ENCODE measurements at regions of chr20 and their contacts with region 1.

Region 1: GRCh38 chr20:49484180-49485140 is 2.0 kb upstream of the KCNB1 start:
- DNase-seq: peak; percentile 64 to 73
- ATAC-seq: peak; percentile 82 to 86
- H3K4me3 ChIP-seq: peak overlapping the region; percentile 51 to 65 (median 63)
- H3K27ac ChIP-seq: peak overlapping the region in 1 of 4 donors; percentile 44
- H3K4me1 ChIP-seq: peaks cover 5 to 37% of the 10 kb centered on the region in 2 donors
- H3K27me3 ChIP-seq: no peaks in the 10 kb centered on the region
- CTCF ChIP-seq: peak; percentile 77 to 91 (median 85)
- POLR2A ChIP-seq: no peak

Region 2: DNA sequence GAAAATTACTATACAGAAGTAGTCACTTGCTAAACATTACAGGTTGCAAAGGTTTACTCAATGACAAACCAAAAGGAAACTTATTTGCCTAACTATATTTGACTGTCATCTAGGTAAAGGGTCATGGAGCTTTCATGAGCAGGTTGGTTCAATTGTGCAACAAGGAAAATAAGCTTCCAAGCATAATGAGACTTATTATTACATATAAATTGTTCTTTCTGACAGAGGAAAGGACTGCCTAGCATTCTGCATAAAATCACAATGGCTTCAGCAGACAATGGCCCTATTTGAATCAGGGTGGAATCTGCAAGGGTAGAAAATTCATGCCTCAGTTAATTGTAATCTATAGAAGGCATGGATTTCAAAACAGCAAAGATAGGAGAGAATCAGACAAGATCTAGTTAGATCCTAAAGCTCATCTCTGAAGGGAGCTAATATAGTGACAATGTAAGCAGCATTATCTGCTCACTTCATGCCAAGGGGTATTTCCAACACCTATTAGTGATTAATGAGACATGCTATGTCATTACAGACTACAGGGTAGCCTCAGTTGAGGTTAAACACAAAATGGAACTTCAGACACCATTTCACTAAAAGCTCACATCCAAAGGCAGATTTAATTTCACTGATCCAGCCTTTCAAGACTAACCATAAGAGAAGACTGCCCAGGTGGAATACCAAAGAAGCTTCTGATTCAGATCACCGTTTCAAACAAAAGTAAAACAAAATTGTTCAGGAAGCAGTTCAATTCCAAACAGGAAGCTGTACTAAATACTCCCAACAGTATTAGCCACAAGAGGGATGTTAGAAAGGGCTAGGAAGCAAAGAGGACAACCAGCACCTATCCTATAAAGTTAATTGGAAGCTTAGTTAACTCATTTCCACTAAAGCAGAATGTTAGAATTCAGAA is 304.8 kb before region 1 on chr20:
- in situ Hi-C with region 1: no loop called
- intact Hi-C with region 1: no loop called
- DNase-seq: no peak
- ATAC-seq: no peak
- H3K4me3 ChIP-seq: no peak overlapping the region
- H3K27ac ChIP-seq: peak overlapping the region in 3 of 4 donors; percentile 3 to 60 (median 46)
- H3K4me1 ChIP-seq: peaks cover 27 to 29% of the 10 kb centered on the region in 2 donors
- H3K27me3 ChIP-seq: no peaks in the 10 kb centered on the region
- CTCF ChIP-seq: no peak
- POLR2A ChIP-seq: no peak

Region 3: GRCh38 chr20:49338061-49338460 is 146.4 kb before region 1 on chr20:
- in situ Hi-C with region 1: loop called in 2 of 4 experiments (anchors 5 to 10 kb)
- intact Hi-C with region 1: loop called (anchors 1 kb)
- DNase-seq: no peak
- ATAC-seq: no peak
- H3K4me3 ChIP-seq: no peak overlapping the region
- H3K27ac ChIP-seq: peak overlapping the region in 3 of 4 donors; percentile 29 to 68 (median 63)
- H3K4me1 ChIP-seq: peaks cover 10 to 24% of the 10 kb centered on the region in 2 donors
- H3K27me3 ChIP-seq: no peaks in the 10 kb centered on the region
- CTCF ChIP-seq: no peak
- POLR2A ChIP-seq: no peak

Region 4: GRCh38 chr20:49384437-49385088 is 99.9 kb before region 1 on chr20:
- in situ Hi-C with region 1: no loop called
- intact Hi-C with region 1: loop called (anchors 1 kb)
- DNase-seq: peak in 1 of 2 donors; percentile 42
- ATAC-seq: no peak
- H3K4me3 ChIP-seq: no peak overlapping the region
- H3K27ac ChIP-seq: peak overlapping the region in 1 of 4 donors; percentile 83
- H3K4me1 ChIP-seq: peaks cover 30 to 65% of the 10 kb centered on the region in 2 donors
- H3K27me3 ChIP-seq: no peaks in the 10 kb centered on the region
- CTCF ChIP-seq: peak; percentile 43 to 64 (median 54)
- POLR2A ChIP-seq: no peak

Region 5: DNA sequence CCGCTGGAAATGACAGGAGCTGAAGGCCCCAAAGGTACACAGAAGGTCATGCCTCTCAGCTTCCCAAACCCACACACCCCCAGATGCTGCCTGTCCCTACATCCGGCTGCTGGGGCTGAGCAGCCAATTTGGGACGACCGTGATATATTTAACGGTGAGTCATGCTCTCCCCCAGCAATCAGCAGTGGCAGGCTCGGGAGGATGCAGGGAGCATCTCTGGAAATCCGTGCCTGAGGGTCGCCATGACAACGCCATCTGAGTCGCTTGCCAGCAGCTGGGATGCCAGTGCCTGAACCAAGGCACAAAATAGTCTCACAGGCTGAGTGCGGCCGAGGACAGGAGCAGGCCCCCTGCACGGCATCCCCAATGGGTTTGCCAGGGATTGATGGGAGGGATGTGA is 59.9 kb before region 1 on chr20:
- in situ Hi-C with region 1: no loop called
- intact Hi-C with region 1: loop called (anchors 5 kb)
- DNase-seq: no peak
- ATAC-seq: no peak
- H3K4me3 ChIP-seq: no peak overlapping the region
- H3K27ac ChIP-seq: peak overlapping the region; percentile 29 to 83 (median 46)
- H3K4me1 ChIP-seq: peaks cover 60 to 68% of the 10 kb centered on the region in 2 donors
- H3K27me3 ChIP-seq: no peaks in the 10 kb centered on the region
- CTCF ChIP-seq: no peak
- POLR2A ChIP-seq: no peak

Region 6: DNA sequence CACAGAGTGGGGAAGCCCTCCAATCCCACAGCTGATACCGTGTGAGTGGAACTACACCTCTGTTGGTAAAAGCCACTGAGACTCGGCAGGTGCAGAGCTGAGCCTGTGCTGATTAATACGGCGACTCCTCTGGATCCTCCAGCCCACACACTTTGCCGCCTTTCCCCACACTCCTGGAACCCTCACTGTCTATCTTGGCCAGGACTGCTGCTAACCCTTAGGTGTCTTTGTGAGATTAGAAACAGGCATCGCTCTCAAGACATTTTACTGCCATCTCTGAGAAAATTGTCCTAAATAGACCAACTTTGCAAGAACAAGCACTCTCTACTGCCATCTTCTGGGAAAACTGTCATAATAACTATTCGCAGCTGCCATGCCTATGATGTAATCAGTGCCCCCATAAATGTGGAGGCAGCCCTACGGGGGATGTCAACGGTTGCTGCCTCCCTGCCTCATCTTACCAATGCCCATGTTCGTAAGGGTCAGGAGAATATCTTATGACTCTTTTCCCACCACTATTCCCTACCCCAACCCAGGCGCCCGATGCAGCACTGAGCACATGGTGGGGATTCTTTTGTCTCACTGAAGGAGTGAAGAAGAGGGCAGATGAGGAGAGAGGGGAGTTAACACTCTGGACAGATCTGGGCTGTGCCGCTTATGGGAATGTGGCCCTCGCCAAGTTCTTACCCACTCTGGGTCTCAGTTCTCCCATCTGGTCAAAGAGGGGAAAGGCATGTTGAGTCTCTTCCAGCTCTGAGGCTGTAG is 24.2 kb after region 1 on chr20:
- in situ Hi-C with region 1: no loop called
- intact Hi-C with region 1: loop called (anchors 2 kb)
- DNase-seq: no peak
- ATAC-seq: peak; percentile 33 to 51
- H3K4me3 ChIP-seq: peak overlapping the region in 1 of 4 donors; percentile 21
- H3K27ac ChIP-seq: peak overlapping the region; percentile 4 to 82 (median 77)
- H3K4me1 ChIP-seq: peaks cover 34 to 41% of the 10 kb centered on the region in 2 donors
- H3K27me3 ChIP-seq: no peaks in the 10 kb centered on the region
- CTCF ChIP-seq: peak; percentile 44 to 66 (median 53)
- POLR2A ChIP-seq: no peak

Region 7: GRCh38 chr20:49620364-49621240 is 136.1 kb after region 1 on chr20:
- in situ Hi-C with region 1: no loop called
- intact Hi-C with region 1: no loop called
- DNase-seq: no peak
- ATAC-seq: no peak
- H3K4me3 ChIP-seq: no peak overlapping the region
- H3K27ac ChIP-seq: no peak overlapping the region
- H3K4me1 ChIP-seq: peaks cover 1 to 3% of the 10 kb centered on the region in 2 donors
- H3K27me3 ChIP-seq: no peaks in the 10 kb centered on the region
- CTCF ChIP-seq: no peak
- POLR2A ChIP-seq: no peak

Measured in gastrocnemius medialis (tissue), 4 donors.